ENCODE measurements at regions of chr16 and their contacts with region 1.

Region 1: GRCh38 chr16:4392382-4393239 is 21.0 kb downstream of the VASN start:
- DNase-seq: peak in 1 of 2 experiments; percentile 90
- H3K4me3 ChIP-seq: no peak overlapping the region
- H3K27ac ChIP-seq: peak overlapping the region; percentile 90
- H3K4me1 ChIP-seq: peaks cover 28% of the 10 kb centered on the region
- H3K27me3 ChIP-seq: no peaks in the 10 kb centered on the region
- CTCF ChIP-seq: no peak

Region 2: GRCh38 chr16:4200000-4200780 is 192.4 kb before region 1 on chr16:
- CTCF ChIA-PET with region 1: no interaction called
- POLR2A ChIA-PET with region 1: no interaction called
- intact Hi-C with region 1: no loop called
- DNase-seq: peak; percentile 73 to 88
- H3K4me3 ChIP-seq: no peak overlapping the region
- H3K27ac ChIP-seq: no peak overlapping the region
- H3K4me1 ChIP-seq: peaks cover 7% of the 10 kb centered on the region
- H3K27me3 ChIP-seq: no peaks in the 10 kb centered on the region
- CTCF ChIP-seq: peak; percentile 70

Region 3: GRCh38 chr16:4307215-4308037 is 85.2 kb before region 1 on chr16:
- CTCF ChIA-PET with region 1: interaction called, 4 read pairs
- POLR2A ChIA-PET with region 1: no interaction called
- intact Hi-C with region 1: loop called (anchors 1 kb)
- DNase-seq: peak; percentile 86 to 99
- H3K4me3 ChIP-seq: peak overlapping the region; percentile 87
- H3K27ac ChIP-seq: peak overlapping the region; percentile 26; the same call in 1 of the 2 replicates
- H3K4me1 ChIP-seq: peaks cover 26% of the 10 kb centered on the region
- H3K27me3 ChIP-seq: no peaks in the 10 kb centered on the region
- CTCF ChIP-seq: no peak

Region 4: DNA sequence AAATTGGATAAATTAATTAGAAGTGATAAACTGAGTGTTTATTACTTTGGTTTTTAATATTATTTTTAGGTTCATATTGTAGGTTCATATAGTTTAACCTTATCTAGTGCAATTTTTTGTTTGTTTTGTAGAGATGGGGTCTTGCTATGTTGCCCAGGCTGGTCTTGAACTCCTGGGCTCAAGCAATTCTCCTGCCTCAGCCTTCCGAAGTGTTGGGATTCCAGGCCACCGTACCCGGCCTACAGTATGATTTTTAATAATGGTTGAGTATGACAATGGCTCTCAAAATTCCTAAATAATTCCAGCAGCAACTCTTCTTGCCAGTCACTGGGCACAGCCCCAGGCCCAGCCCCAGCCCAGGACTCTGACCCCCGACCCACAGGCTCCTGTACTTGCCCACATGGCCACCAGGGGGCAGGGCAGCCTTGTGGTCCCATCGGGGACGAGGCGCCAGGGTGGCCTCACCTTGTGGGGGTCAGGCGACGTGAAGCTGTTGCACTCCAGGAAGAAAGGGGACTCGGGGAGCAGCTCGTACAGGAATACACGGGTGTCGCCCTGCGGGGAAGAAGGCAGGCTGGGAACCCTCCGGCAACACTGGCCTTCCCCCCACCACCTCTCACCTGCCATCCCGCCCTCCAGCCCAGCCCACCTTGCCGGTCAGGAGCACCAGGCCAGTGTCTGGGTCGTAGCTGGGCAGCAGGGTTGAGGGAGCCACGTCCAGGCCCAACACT is 33.6 kb before region 1 on chr16:
- CTCF ChIA-PET with region 1: interaction called, 12 read pairs
- POLR2A ChIA-PET with region 1: no interaction called
- intact Hi-C with region 1: no loop called
- DNase-seq: peak in 1 of 2 experiments; percentile 75
- H3K4me3 ChIP-seq: no peak overlapping the region
- H3K27ac ChIP-seq: no peak overlapping the region
- H3K4me1 ChIP-seq: peaks cover 4% of the 10 kb centered on the region
- H3K27me3 ChIP-seq: no peaks in the 10 kb centered on the region
- CTCF ChIP-seq: peak; percentile 99

Region 5: GRCh38 chr16:4475880-4476788 is 83.5 kb after region 1 on chr16 and contains the start of gene HMOX2:
- CTCF ChIA-PET with region 1: interaction called, 19 read pairs
- POLR2A ChIA-PET with region 1: no interaction called
- intact Hi-C with region 1: no loop called
- DNase-seq: peak; percentile 86 to 99
- H3K4me3 ChIP-seq: peak within 1 kb of the TSS; percentile 96
- H3K27ac ChIP-seq: peak within 1 kb of the TSS; percentile 71
- H3K4me1 ChIP-seq: peaks cover 27% of the 10 kb centered on the region
- H3K27me3 ChIP-seq: no peaks in the 10 kb centered on the region
- CTCF ChIP-seq: no peak; the same call in 1 of the 2 replicates
- total RNA-seq, gene HMOX2: 68.1 and 69.5 TPM in 2 replicates